ENCODE measurements at regions of chr1 and their contacts with region 1.

Region 1: DNA sequence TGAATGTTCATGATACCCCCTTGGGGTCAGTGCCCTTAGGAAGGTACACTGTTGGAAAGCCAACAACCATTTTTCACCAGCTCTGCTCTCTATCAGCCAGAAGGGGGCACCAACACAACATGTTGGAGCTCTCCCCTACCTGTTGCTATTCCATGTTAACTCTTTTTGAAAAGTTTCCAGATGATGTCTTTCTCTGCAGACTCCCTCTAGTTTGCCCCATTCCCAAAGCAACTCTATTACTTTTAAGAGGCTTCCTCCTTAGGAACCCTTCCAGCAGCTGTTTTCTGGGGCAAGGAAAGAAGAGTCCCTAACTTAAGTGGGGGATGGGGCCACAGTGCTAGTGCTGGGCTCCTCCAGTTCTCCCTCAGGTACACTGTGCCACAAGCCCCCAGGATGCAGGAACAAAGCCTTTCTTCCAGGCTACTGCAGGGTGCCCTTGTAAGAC is 22.9 kb upstream of the NDC1 start:
- DNase-seq: peak; percentile 60
- ATAC-seq: peak; percentile 80
- H3K4me3 Mint-ChIP-seq: no peak overlapping the region
- H3K27ac Mint-ChIP-seq: no peak overlapping the region
- H3K4me1 Mint-ChIP-seq: peaks cover 4% of the 10 kb centered on the region
- H3K27me3 Mint-ChIP-seq: no peaks in the 10 kb centered on the region
- CTCF ChIP-seq: peak; percentile 95

Region 2: DNA sequence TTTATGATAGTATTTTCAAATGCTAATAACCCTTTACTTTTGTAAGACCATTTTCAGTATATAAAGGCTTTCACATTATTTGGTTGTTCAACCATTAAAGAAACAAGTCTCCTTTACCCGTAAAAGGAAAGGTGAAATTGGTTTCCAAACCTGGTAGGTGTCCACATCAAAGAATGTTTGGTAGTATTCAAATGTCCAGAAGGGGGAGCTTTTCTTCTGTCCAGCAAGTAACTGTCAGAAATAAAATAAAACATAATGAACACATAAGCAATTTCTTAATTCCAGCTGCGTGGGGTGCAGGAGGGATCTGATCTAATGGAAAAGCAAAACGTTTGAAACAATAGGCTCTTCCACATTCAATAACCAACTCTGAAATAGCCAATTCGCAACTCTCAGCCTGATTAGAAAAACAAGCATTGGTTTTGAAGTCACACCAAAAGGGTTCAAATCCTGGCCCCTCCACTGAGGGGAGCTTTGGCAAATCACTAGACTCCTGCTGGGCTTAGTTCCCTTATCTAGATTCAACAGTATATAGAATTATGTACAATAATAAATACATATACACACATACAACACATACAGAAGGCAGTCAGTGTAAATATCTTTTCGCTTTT is 17.6 kb after region 1 on chr1:
- CTCF ChIA-PET with region 1: interaction called, 68 read pairs
- POLR2A ChIA-PET with region 1: interaction called, 4 read pairs
- intact Hi-C with region 1: no loop called
- DNase-seq: no peak
- ATAC-seq: no peak
- H3K4me3 Mint-ChIP-seq: no peak overlapping the region
- H3K27ac Mint-ChIP-seq: no peak overlapping the region
- H3K4me1 Mint-ChIP-seq: peaks cover 2% of the 10 kb centered on the region
- H3K27me3 Mint-ChIP-seq: no peaks in the 10 kb centered on the region
- CTCF ChIP-seq: no peak

Region 3: DNA sequence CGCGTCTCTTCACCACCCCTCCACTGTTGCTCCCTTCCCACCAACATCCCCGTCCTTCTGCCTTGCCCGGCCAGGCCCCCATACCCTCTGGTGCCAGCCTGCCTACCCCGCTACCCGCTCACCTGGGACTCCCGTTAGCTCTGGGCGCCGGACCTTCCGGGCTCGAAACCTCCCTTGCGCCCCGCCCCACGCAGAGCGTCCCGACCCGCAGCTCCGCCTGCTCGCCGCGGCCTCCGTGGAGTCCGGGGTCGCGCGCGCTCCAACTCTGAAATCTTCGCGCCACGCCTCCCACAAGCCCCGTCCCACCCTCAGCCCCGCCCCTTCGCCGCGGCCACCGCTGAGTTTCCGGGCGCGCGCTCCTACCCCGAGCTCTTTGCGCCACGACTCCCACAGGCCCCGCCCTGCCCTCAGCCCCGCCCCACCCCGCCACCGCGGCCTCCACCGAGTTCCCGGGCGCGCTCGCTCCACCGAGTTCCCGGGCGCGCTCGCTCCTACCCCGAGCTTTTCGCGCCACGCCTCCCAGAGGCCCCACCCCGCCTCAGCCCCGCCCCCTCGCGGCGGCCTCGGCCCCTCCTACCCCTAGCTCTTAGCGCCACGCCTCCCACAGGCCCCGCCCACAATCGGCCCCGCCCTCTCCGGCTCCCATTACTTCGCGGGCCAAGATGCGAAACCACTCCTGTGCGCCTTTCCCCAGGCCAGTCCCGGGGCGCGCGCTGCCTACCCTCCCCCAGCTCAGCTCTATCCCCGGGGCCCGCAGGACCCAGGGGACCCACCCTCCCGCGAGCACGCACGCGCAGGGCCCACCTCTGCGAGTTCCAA is 84.7 kb after region 1 on chr1 and contains the start of gene IFT25:
- CTCF ChIA-PET with region 1: interaction called, 146 read pairs
- POLR2A ChIA-PET with region 1: interaction called, 3 read pairs
- intact Hi-C with region 1: no loop called
- DNase-seq: peak; percentile 99
- ATAC-seq: peak; percentile 86
- H3K4me3 Mint-ChIP-seq: peak within 1 kb of the TSS; percentile 93
- H3K27ac Mint-ChIP-seq: peak within 1 kb of the TSS; percentile 88
- H3K4me1 Mint-ChIP-seq: peaks cover 53% of the 10 kb centered on the region
- H3K27me3 Mint-ChIP-seq: no peaks in the 10 kb centered on the region
- CTCF ChIP-seq: no peak
- total RNA-seq, gene IFT25: 60.5 to 63.5 TPM

Region 4: GRCh38 chr1:53959664-53960250 is 98.8 kb after region 1 on chr1:
- CTCF ChIA-PET with region 1: interaction called, 139 read pairs
- POLR2A ChIA-PET with region 1: no interaction called
- intact Hi-C with region 1: loop called (anchors 5 kb)
- DNase-seq: peak; percentile 15
- ATAC-seq: peak; percentile 68
- H3K4me3 Mint-ChIP-seq: no peak overlapping the region
- H3K27ac Mint-ChIP-seq: no peak overlapping the region
- H3K4me1 Mint-ChIP-seq: peaks cover 7% of the 10 kb centered on the region
- H3K27me3 Mint-ChIP-seq: no peaks in the 10 kb centered on the region
- CTCF ChIP-seq: peak; percentile 78

Measured in activated CD8-positive, alpha-beta T cell treated with anti-CD3 and anti-CD28 coated beads for 36 hours (primary cell).